GM10248 (cell line): ENCODE measurements at regions of chr17 and their contacts with region 1.

Region 1: DNA sequence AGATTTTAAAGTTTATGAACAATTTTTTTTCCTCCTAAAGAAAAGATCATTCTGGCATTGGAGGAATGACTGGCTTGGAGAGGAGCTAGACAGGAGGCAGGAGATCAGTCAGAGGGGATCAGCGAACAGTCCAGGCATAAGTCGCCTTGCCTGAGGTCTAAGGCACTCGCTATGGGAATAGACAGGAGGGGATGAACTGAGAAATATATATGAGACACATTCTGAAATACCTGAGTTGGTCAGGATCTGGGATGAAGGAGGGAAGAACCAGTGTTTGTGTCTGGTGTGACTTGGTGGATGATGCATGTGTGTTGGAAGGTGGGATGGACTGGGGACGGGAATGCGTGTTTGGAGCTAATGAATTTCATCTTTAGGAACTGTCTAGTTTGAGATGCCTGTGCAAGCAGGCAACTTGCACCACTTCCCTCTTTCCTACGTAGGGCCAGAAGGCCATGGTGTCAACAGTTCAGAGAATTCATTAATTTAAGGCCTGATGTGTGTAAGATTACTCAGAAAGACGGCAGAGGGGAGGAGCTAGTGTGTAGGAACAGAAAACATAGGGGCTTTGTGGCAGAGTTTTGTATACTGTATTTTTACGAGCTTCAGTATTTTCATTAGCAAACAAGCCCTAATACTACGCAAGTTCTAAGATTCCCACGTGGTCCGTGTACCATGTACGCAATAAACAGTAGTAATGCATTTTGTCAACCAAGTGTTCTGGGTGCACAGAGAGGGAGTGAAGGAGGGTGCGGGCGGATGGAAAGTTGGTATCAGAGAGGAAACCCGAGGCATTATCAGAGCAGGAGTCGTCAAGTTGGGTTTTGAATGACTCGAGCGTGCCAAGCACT is 825 bp downstream of the HEATR6 start:
- DNase-seq: peak; percentile 26
- CTCF ChIP-seq: no peak

Region 2: GRCh38 chr17:60089096-60089806 is 11.4 kb after region 1 on chr17:
- CTCF ChIA-PET with region 1: interaction called, 10 read pairs
- POLR2A ChIA-PET with region 1: no interaction called
- DNase-seq: peak; percentile 56
- CTCF ChIP-seq: no peak

Region 3: DNA sequence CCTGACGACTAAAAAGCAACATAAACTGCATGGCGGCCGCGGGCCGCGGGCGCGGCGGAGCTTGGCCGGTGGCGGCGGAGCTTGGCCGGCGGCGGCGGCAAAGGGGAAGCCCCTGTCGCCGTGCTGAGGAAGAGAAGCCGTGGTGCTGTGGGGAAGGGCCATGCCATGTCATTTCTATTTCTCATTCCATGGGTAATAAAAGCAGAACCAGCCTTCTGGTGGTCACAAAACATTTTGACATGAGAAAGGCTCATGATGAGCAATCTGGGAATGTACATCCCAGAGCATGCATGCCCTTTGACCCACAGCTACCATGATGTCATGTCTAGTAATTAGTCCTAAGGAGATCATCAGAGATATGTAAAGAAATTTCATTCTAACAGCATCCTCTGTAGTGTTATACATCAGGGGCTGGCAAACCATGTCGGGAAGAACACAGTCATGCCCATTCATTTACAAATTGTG is 24.8 kb after region 1 on chr17:
- CTCF ChIA-PET with region 1: no interaction called
- POLR2A ChIA-PET with region 1: no interaction called
- DNase-seq: no peak
- CTCF ChIP-seq: no peak